Calu3 (cell line): ENCODE measurements at regions of chr6 and their contacts with region 1.

Region 1: GRCh38 chr6:16278048-16278724 is 39.8 kb downstream of the GMPR start:
- DNase-seq: peak; percentile 1
- H3K4me3 Mint-ChIP-seq: peak overlapping the region; percentile 29
- H3K27ac Mint-ChIP-seq: peak overlapping the region; percentile 19
- H3K4me1 Mint-ChIP-seq: peaks cover 15% of the 10 kb centered on the region
- H3K27me3 Mint-ChIP-seq: no peaks in the 10 kb centered on the region
- CTCF ChIP-seq: no peak

Region 2: DNA sequence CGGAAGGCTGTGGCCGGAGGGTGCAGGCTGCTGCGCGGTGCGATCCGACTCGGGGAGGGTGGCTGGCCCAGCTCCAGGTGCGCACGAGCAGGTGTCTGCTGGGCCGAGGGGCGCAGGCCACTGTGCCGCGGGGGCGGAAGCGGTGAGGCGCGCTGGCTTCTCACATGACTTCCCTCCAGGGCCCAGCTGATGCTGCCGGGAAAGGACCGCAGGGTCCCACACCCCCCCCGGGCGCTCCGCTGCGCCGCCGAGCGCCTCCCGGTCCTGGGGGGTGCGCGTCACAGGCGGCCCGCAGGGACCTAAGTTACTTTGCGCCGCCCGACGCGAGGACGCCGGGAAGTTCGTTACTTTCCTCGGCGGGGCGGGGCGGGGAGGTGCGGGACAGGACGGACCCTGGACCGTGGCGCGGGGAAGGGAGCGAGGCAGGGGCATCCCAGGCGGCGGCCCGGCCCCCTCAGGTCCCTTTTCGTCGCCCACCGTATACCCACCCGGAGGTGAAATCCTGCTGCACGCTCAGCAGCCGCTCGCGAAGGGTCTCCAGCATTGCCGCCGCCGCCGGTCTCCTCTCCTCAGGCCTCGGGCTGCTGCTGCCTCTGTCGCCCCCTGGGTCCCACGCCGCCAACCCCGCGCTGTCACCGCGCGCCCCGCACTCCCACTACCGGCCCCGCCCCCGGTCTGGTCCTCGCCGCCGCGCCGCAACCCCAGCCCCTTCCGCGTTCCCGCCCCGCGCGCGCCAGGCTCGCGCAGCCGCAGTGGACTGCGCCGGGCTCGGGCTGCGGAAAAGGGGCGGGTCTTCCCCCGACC is 615.7 kb before region 1 on chr6 and contains the start of gene DTNBP1:
- CTCF ChIA-PET with region 1: no interaction called
- intact Hi-C with region 1: no loop called
- DNase-seq: peak; percentile 82
- H3K4me3 Mint-ChIP-seq: peak within 1 kb of the TSS; percentile 71
- H3K27ac Mint-ChIP-seq: no peak within 1 kb of the TSS
- H3K4me1 Mint-ChIP-seq: peaks cover 10% of the 10 kb centered on the region
- H3K27me3 Mint-ChIP-seq: peaks cover 21% of the 10 kb centered on the region
- CTCF ChIP-seq: no peak
- total RNA-seq, gene DTNBP1: 10.0 and 12.8 TPM in 2 replicates

Region 3: DNA sequence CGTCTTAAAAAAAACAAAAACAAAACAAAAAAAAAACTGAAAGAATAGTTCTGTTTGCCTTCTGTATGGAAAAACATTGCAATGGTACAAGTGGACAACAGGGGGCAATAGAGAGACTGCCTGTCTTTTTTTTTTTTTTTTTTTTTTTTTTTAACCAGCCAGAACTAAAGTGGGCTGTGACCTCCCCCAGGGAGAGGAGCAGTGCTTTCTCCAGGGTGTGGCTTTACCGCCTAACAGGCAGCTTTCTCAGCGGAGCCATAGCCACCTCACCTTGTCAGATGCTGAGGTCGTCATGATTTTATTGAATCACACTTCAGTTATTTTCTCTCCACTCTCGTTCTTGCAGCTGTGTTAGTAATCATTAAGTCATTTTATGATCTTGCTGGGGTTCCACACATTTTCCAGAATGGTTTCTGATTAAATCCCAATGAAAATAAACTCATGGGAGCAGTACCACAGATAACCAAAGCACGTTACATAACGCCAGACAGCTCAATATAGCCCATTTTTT is 38.6 kb after region 1 on chr6:
- CTCF ChIA-PET with region 1: interaction called, 10 read pairs
- intact Hi-C with region 1: no loop called
- DNase-seq: no peak
- H3K4me3 Mint-ChIP-seq: no peak overlapping the region
- H3K27ac Mint-ChIP-seq: no peak overlapping the region
- H3K4me1 Mint-ChIP-seq: peaks cover 10% of the 10 kb centered on the region
- H3K27me3 Mint-ChIP-seq: no peaks in the 10 kb centered on the region
- CTCF ChIP-seq: no peak